Breast epithelium (tissue), 4 donors: ENCODE measurements at regions of chr10 and their contacts with region 1.

Region 1: DNA sequence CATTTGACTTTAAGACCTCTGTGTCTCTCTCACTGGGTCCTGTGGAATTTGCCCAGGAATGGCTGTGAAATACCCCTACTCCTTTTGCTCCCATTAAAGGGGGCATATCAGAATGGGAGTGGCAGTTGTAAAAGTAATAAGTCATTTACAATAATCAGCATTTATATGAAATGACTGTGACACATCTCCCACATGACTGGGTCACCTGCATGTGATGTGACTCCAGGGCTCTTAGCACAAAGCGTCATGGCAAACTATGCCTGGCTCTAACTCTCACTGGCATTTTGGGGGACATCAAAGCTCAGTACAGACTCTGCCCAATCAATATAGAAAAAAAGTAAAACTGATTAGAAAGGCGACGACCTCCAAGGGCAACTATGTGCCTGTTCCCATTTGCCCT is 157.6 kb downstream of the RPS24 start:
- DNase-seq: no peak
- H3K4me3 ChIP-seq: no peak overlapping the region
- H3K27ac ChIP-seq: no peak overlapping the region
- H3K4me1 ChIP-seq: no peaks in the 10 kb centered on the region
- H3K27me3 ChIP-seq: no peaks in the 10 kb centered on the region
- CTCF ChIP-seq: no peak
- POLR2A ChIP-seq: no peak

Region 2: DNA sequence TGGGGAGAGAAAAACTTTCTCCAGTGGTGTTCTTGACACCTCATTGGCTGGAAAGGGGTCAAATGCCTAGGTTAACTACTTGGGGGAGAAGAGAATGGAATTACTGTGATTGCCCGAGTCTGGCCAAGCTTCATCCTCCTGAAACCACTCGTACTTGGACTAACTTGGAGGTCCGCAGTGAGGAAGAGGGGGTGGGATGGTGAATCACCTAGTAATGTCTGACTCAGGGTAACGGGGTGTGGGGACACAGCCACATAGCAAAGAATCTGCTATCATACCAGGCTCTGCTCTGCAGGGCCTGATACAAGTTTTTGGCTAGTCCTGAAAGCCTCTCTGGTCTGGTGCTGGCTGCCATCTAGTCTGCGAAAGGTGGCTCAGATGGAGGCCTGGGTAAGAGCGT is 33.3 kb after region 1 on chr10:
- intact Hi-C with region 1: loop called (anchors 1 kb)
- DNase-seq: no peak
- H3K4me3 ChIP-seq: no peak overlapping the region
- H3K27ac ChIP-seq: no peak overlapping the region
- H3K4me1 ChIP-seq: no peaks in the 10 kb centered on the region
- H3K27me3 ChIP-seq: no peaks in the 10 kb centered on the region
- CTCF ChIP-seq: no peak
- POLR2A ChIP-seq: no peak